PC-9 (cell line): ENCODE measurements at regions of chr7 and their contacts with region 1.

Region 1: GRCh38 chr7:2477447-2478398 is 1.5 kb upstream of the GRIFIN start:
- DNase-seq: peak in 1 of 2 experiments; percentile 76
- H3K4me3 ChIP-seq: no peak overlapping the region
- H3K27ac ChIP-seq: no peak overlapping the region
- H3K4me1 ChIP-seq: peaks cover 8% of the 10 kb centered on the region; the same call in 1 of the 2 replicates
- H3K27me3 ChIP-seq: peaks cover 3% of the 10 kb centered on the region; the same call in 1 of the 2 replicates
- CTCF ChIP-seq: peak; percentile 87

Region 2: GRCh38 chr7:1889556-1890181 is 588.1 kb before region 1 on chr7:
- CTCF ChIA-PET with region 1: no interaction called
- POLR2A ChIA-PET with region 1: no interaction called
- intact Hi-C with region 1: no loop called
- DNase-seq: peak in 1 of 2 experiments; percentile 22
- H3K4me3 ChIP-seq: no peak overlapping the region
- H3K27ac ChIP-seq: no peak overlapping the region
- H3K4me1 ChIP-seq: peaks cover 3% of the 10 kb centered on the region
- H3K27me3 ChIP-seq: no peaks in the 10 kb centered on the region
- CTCF ChIP-seq: no peak

Region 3: GRCh38 chr7:2495418-2496299 is 17.9 kb after region 1 on chr7:
- CTCF ChIA-PET with region 1: no interaction called
- POLR2A ChIA-PET with region 1: no interaction called
- intact Hi-C with region 1: no loop called
- DNase-seq: no peak
- H3K4me3 ChIP-seq: no peak overlapping the region
- H3K27ac ChIP-seq: no peak overlapping the region
- H3K4me1 ChIP-seq: peaks cover 12% of the 10 kb centered on the region; the same call in 1 of the 2 replicates
- H3K27me3 ChIP-seq: peaks cover 31% of the 10 kb centered on the region
- CTCF ChIP-seq: no peak

Region 4: DNA sequence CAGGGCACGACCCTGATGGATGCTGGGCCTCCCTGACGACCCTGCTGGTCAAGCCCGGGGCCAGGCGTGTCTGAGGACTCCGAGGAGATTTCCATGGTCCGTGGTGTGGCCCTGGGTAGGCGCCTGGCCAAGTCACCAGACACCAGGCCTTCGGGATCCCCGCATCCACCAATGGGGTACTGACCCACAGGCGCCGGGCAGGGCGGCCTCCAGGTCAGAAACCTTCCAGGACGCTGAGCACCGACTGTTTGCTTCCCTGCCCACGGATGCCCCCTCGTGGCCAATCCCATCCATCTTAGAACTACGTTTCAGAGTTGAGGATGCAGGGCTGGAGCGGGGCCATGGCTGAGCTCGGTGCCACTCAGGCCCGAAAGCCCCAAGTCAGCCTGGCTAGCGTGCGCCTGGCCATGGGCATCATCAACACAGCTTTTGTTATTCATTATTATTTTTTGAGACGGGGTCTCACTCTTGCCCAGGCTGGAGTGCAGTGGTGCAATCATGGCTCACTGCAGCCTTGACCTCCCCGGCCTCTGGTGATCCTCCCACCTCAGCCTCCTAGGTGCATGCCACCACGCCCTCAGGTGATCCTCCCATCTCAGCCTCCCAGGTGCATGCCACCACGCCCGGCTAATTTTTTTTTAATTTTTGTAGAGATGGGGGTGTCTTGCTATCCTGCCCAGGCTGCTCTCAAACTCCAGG is 203.2 kb after region 1 on chr7:
- CTCF ChIA-PET with region 1: no interaction called
- POLR2A ChIA-PET with region 1: no interaction called
- intact Hi-C with region 1: loop called (anchors 1 kb)
- DNase-seq: peak; percentile 47 to 83
- H3K4me3 ChIP-seq: no peak overlapping the region
- H3K27ac ChIP-seq: no peak overlapping the region
- H3K4me1 ChIP-seq: no peaks in the 10 kb centered on the region
- H3K27me3 ChIP-seq: 0 out of 2 replicates have a peak, but pooled peaks cover 9% of the 10 kb centered on the region
- CTCF ChIP-seq: peak; percentile 85

Region 5: GRCh38 chr7:2709553-2710285 is 232.0 kb after region 1 on chr7:
- CTCF ChIA-PET with region 1: no interaction called
- POLR2A ChIA-PET with region 1: no interaction called
- intact Hi-C with region 1: loop called (anchors 1 kb)
- DNase-seq: peak in 1 of 2 experiments; percentile 85
- H3K4me3 ChIP-seq: no peak overlapping the region
- H3K27ac ChIP-seq: no peak overlapping the region
- H3K4me1 ChIP-seq: no peaks in the 10 kb centered on the region
- H3K27me3 ChIP-seq: no peaks in the 10 kb centered on the region
- CTCF ChIP-seq: peak; percentile 66